Posterior vena cava (tissue), 2 donors: ENCODE measurements at regions of chr1 and their contacts with region 1.

Region 1: DNA sequence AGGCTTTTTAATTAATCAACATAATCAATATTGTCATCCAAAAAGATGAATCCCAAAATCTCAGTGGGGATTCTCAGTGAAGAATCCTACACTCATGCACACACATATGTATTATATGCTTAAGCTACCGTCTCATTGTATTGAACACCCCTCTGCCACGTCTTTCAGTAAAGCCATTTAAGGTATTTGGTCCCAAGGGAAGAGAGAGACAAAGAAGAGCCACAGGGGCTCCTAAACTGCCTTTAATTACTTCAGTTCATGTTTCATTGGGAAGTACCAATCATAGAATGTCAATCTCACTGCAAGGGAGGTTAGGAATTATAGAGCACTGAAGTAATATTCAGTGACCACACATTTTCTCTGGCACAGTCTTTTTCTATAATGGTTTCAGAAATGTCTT is 388.6 kb upstream of the NEGR1 start:
- DNase-seq: no peak

Region 2: GRCh38 chr1:71417421-71417820 is 1253.5 kb before region 1 on chr1:
- intact Hi-C with region 1: loop called in 1 of 2 experiments (anchors 5 kb)
- DNase-seq: no peak